ENCODE measurements at regions of chr7 and their contacts with region 1.

Region 1: DNA sequence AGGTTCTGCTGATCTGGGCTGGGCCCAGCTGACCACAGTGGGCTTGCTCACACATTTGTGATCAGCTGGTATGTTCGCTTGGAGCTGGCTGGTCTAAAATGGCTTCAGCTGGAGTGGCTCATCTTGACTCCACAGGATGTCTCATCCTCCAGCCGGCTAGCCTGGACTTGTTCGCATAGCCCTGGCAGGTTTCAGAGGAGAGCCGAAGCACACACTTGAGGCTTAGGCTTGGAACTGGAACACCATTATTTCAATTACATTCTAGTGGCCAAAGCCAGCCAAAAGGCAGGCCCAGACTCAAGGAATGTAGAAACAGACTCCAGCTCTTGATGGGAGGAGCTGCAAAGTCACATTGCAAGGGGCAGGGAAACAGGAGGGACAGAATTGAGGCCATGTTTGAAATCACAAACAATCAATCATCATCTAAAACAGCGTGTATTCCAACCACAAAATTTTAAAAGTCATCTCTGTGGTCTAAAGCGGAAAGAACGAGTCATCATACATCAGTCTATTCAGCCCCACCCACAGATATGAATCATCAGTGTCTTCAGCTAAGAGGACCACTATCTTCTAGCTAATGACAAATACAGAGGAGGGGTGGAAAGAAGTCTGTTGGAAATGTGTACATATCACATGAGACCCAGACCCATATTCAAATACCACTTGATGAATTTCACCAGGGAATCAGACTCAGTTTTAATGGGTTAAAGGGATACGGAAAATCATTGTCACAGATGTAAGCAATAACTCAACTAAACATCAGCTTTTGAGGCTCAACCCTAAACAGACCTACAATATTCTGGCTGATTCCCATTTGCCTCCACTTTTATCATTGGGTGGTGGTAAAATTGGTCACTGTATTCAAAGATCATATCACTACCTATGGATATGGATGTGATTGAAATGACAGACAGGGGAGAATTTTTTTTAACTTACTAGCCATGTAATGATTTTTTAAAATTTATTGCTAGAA is 139.0 kb upstream of the MKLN1 start:
- DNase-seq: no peak
- ATAC-seq: peak in 2 of 4 donors; percentile 31 to 52
- H3K4me3 ChIP-seq: no peak overlapping the region
- H3K27ac ChIP-seq: peak overlapping the region in 1 of 12 donors; percentile 38
- H3K4me1 ChIP-seq: peaks cover 0 to 31% (median 0%) of the 10 kb centered on the region in 12 donors
- H3K27me3 ChIP-seq: no peaks in the 10 kb centered on the region
- CTCF ChIP-seq: no peak
- POLR2A ChIP-seq: no peak

Region 2: DNA sequence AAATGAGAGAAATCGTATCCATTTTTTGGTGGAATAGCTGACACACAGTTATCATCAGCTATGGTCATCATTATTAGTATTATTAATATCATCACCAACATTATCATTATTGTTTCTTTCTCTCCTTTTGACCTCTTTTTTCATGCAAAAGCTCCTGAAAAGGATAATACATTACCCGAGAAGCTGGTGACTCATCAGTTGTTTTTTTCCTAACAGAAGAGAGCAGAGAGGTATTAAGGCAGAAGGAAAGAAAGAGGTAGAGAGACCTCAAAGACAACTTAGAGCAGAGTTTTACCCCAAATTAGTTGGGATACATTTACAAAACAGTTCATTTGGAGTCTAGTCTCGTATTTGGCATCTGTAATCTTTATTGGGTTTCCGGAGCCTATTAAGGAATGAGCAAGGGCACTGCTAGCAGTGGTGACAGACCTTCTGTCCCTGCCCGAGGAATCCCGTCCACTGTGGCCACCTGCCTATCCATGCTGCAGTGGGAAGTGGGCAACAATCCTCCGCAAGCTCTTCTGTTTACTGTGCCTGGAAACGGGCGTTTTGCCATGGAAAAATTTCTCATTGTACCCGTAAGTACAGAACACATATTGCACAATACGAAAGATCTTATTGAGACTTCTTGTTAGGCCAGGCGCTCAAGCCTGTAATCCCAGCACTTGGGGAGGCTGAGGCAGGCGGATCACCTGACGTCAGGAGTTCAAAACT is 31.0 kb before region 1 on chr7:
- intact Hi-C with region 1: no loop called
- DNase-seq: peak in 1 of 5 donors; percentile 48
- ATAC-seq: peak; percentile 76 to 90 (median 82)
- H3K4me3 ChIP-seq: no peak overlapping the region
- H3K27ac ChIP-seq: no peak overlapping the region
- H3K4me1 ChIP-seq: peaks cover 0 to 6% (median 0%) of the 10 kb centered on the region in 12 donors
- H3K27me3 ChIP-seq: no peaks in the 10 kb centered on the region
- CTCF ChIP-seq: no peak
- POLR2A ChIP-seq: no peak

Region 3: DNA sequence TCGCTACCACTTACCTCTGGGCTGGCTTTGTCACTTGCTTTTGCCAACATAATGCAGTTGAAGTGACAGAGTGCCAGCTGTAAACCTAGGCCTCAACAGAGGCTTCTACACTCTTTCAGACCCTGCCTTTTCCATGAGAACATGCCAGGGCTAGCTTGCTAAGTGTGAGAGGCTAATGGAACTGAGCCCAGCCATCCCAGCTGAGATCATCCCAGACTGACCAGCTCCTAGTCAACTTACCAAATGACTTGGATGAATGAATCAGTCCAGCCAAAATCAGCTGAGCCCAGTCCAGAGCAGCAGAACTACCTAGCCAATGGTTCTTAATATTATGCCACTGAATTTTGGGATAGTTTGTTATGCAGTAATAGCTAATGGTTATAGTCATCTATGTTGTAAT is 104.4 kb after region 1 on chr7:
- intact Hi-C with region 1: loop called in 1 of 10 experiments (anchors 5 kb)
- DNase-seq: peak in 4 of 5 donors; percentile 27 to 72 (median 53)
- ATAC-seq: peak; percentile 68 to 90 (median 80)
- H3K4me3 ChIP-seq: no peak overlapping the region
- H3K27ac ChIP-seq: peak overlapping the region in 7 of 12 donors; percentile 4 to 51 (median 44)
- H3K4me1 ChIP-seq: peaks cover 0 to 40% (median 8%) of the 10 kb centered on the region in 12 donors
- H3K27me3 ChIP-seq: no peaks in the 10 kb centered on the region
- CTCF ChIP-seq: no peak
- POLR2A ChIP-seq: no peak